WTC11 (cell line): ENCODE measurements at regions of chr5 and their contacts with region 1.

Region 1: DNA sequence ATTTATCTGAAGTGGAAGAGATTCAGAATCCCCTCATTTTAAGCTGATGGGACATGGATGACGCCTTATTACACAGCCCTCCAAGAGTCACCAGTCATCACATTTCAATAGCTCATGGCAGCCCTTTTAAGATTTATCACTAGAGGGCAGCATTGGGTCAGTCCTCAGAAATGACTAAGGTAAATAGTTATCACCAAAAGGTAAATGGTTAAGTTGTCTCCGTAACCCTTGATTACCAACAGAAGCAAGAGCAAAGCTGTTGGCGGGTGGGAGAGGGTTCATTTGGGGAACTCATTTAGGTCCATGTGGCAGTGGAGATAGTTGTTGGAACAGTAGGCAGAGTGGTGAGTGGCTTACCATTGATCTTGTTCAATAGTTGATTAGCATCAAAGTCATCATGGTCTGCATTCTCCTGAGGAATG is 12.0 kb upstream of the C9 start:
- DNase-seq: peak; percentile 38
- ATAC-seq: peak; percentile 97
- H3K4me3 Mint-ChIP-seq: no peak overlapping the region
- H3K27ac Mint-ChIP-seq: no peak overlapping the region
- H3K4me1 Mint-ChIP-seq: peaks cover 20% of the 10 kb centered on the region
- H3K27me3 Mint-ChIP-seq: no peaks in the 10 kb centered on the region
- CTCF ChIP-seq: peak; percentile 66

Region 2: DNA sequence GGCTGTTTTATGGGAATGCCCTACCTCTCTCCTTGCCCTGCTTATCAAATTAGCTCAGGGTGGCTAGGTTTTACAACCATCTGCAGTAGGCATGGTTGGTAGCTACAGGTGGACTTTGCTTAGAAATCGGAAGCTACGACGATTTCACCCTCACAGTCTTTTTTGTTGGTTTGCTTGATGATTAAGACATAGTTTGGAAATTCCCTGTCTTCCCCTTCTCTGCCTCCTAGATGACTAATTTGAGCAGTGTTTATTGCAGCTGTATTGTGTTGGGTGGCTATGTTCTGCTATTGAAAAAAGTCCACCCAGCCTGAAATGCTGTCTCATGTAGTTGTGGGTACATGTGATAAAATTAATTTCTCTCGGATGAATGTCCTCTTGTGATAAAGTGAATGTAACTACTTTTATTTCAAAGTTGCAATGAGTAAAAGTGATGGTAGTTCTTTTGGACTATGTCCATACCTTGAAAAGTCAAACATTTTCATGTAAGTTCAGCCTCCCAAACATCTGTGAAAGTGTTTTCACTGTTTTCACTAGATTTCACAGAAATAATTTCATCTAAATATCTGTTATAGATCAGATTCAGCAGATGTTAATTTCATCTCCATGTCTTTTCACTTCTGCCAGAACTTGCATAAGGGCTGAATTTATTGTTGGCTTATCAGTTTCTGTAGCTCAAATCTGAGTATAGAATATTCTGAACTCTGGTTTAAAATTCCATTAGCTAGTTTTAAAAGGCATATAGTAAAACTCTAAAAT is 119.6 kb before region 1 on chr5:
- CTCF ChIA-PET with region 1: no interaction called
- POLR2A ChIA-PET with region 1: no interaction called
- DNase-seq: no peak
- ATAC-seq: no peak
- H3K4me3 Mint-ChIP-seq: no peak overlapping the region
- H3K27ac Mint-ChIP-seq: no peak overlapping the region
- H3K4me1 Mint-ChIP-seq: no peaks in the 10 kb centered on the region
- H3K27me3 Mint-ChIP-seq: no peaks in the 10 kb centered on the region
- CTCF ChIP-seq: no peak

Region 3: GRCh38 chr5:39360471-39361111 is 15.7 kb before region 1 on chr5:
- CTCF ChIA-PET with region 1: interaction called, 15 read pairs
- POLR2A ChIA-PET with region 1: no interaction called
- DNase-seq: no peak
- ATAC-seq: no peak
- H3K4me3 Mint-ChIP-seq: no peak overlapping the region
- H3K27ac Mint-ChIP-seq: no peak overlapping the region
- H3K4me1 Mint-ChIP-seq: peaks cover 46% of the 10 kb centered on the region
- H3K27me3 Mint-ChIP-seq: peaks cover 6% of the 10 kb centered on the region
- CTCF ChIP-seq: no peak

Region 4: DNA sequence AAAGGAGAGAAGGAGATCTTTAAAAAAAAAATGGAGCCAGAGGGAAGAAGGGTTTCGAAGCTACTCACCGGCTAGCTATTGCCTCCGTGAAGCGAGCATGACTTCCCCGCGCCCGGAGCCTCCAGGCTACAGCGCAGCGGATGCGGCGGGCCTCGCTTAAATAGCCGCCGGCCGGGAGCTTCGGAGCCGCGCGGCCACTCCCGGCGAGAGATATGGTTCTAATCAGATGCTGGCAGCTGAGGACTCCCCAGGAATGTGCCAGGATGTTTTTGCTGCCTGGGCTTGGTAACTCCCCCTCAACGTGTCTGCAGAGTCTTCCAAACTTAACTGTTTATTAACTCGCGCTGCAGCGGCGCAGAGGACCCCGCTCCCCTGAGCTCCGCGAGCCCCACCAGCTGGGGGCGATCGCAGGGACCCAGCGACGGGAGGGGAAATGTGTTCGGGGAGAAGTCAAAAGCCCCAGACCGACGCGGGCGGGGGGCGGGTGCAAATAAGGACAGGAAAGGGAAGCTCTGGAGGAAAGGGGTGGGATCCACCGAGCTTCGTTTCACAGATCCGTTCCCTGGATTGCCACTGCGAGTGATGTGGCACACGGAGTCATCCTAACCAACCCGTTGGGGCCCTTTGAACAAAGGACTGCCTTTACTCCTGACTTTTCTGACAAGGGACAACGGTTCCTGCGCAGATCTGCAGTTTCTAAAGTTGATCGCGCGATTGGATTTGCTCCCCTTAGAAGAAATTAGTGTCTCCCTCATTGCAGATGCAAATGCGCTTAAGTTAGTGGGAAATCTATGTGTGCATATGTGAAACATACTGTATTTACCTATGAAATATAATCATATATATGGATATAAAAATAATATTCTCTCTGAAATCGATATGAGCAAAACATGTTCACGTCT is 48.7 kb after region 1 on chr5 and contains the start of gene DAB2:
- CTCF ChIA-PET with region 1: interaction called, 33 read pairs
- POLR2A ChIA-PET with region 1: interaction called, 4 read pairs
- DNase-seq: peak; percentile 85
- ATAC-seq: peak; percentile 88
- H3K4me3 Mint-ChIP-seq: peak within 1 kb of the TSS; percentile 82
- H3K27ac Mint-ChIP-seq: peak within 1 kb of the TSS; percentile 27; the same call in 1 of the 2 replicates
- H3K4me1 Mint-ChIP-seq: peaks cover 54% of the 10 kb centered on the region
- H3K27me3 Mint-ChIP-seq: peaks cover 5% of the 10 kb centered on the region; the same call in 1 of the 2 replicates
- CTCF ChIP-seq: no peak
- total RNA-seq, gene DAB2: 3.8 to 7.2 TPM (median 3.9 TPM) in 3 replicates

Region 5: DNA sequence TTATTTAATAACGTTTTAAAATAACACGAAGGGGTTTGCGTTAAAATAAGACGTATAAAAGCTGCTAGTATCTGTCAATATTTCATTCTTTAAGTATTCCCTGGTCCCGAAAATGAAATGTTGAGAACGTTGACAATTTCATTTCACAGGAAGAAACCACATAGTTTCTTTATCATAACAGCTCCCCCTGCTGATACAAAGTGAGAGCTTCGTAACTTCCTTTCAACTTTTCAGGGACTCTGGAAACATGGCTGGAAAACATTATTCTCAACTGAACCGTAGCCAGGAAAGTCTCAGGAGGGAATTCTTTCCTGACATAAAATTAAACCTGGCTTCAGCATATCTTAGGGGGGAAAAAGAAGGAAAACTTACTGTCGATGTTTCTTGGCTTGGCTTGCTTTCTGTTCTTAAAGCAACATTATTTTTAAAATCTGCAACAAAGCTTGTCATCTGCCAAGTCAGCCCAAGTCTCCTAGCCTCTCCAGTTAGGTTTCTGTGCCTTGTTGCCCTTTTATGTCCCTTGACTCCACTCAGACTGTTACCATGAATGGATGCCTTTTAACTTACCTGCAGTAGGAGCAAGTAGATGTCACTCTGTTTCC is 171.3 kb after region 1 on chr5:
- CTCF ChIA-PET with region 1: interaction called, 72 read pairs
- POLR2A ChIA-PET with region 1: interaction called, 4 read pairs
- DNase-seq: no peak
- ATAC-seq: peak; percentile 47; the same call in 1 of the 2 replicates
- H3K4me3 Mint-ChIP-seq: no peak overlapping the region
- H3K27ac Mint-ChIP-seq: no peak overlapping the region
- H3K4me1 Mint-ChIP-seq: no peaks in the 10 kb centered on the region
- H3K27me3 Mint-ChIP-seq: no peaks in the 10 kb centered on the region
- CTCF ChIP-seq: peak; percentile 34; the same call in 1 of the 2 replicates

Region 6: GRCh38 chr5:39570403-39571027 is 194.2 kb after region 1 on chr5:
- CTCF ChIA-PET with region 1: interaction called, 27 read pairs
- POLR2A ChIA-PET with region 1: no interaction called
- DNase-seq: no peak
- ATAC-seq: peak; percentile 30; the same call in 1 of the 2 replicates
- H3K4me3 Mint-ChIP-seq: no peak overlapping the region
- H3K27ac Mint-ChIP-seq: no peak overlapping the region
- H3K4me1 Mint-ChIP-seq: peaks cover 10% of the 10 kb centered on the region
- H3K27me3 Mint-ChIP-seq: no peaks in the 10 kb centered on the region
- CTCF ChIP-seq: no peak; the same call in 1 of the 2 replicates